IMR-90 (cell line): ENCODE measurements at regions of chr7 and their contacts with region 1.

Region 1: DNA sequence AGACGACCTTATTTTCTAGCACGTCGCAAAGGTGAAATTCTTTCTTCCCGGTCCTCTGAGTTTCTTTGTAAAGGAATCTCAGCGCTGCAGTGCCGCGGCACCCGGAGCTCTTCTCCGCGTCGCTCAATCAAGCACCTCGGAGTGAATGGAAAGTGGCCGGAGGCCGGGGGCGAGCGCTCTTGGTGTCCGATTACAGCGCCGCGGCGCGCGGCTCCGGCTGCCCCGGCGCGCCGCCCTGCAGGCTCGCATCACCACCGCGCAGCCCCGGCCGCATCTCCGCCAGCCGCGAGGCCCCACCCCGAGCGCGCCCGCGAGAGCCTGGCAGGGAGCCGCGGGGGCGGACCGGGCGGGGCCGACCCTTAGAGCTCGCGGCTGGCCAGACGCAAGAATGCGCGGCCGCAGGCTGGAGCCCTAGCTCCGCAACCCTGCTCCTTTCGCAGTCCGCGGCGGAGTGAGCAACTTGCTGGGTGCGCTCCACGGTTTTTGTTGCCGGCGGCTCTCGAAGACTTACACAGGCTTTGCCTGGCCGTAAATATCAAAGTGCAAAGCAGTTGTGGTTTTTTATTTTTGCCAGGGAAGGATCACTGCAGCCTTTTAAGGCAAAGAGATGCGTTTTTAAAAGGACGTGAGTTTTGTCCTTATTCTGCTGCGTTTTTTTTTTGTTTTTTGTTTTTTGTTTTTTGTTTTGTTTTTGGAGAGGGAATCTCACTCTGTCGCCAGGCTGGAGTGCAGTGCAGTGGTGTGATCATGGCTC is at the start of gene SEMA3C:
- DNase-seq: peak; percentile 94
- ATAC-seq: peak; percentile 96
- H3K4me3 ChIP-seq: peak within 1 kb of the TSS; percentile 83
- H3K27ac ChIP-seq: peak within 1 kb of the TSS; percentile 73
- H3K4me1 ChIP-seq: peaks cover 1% of the 10 kb centered on the region; the same call in 1 of the 2 replicates
- H3K27me3 ChIP-seq: no peaks in the 10 kb centered on the region
- CTCF ChIP-seq: 0 out of 2 replicates have a peak, but pooled peaks have one; percentile 15
- POLR2A ChIP-seq: peak; percentile 87
- RAD21 ChIP-seq: peak; percentile 42
- total RNA-seq, gene SEMA3C: 97.1 and 116 TPM in 2 replicates

Region 2: DNA sequence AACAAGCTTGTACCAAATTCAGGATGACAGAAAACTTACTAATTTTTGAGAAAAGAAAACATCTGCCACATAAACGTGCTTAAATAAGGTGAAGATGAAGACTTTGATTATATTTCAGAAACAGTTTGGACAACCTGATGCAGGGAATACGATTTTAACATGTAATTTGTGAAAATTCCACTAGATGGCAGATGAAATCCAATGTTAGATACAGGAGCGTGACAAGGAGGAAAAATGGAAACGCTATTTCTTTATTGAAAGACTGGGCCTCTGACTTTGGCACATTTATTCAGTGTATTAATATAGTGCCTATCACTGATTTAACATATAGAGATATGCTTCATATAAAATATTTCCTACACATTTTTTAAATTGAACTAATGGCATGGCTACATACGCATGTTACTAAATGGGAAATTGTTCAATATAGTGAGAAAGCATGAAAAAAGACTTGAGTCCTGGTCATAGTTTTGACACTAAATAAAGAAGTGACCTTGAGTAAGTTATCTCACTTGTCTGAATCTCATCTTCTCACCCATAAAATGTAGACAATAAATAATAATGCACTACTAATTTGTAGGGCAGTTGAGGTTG is 219.9 kb before region 1 on chr7:
- CTCF ChIA-PET with region 1: interaction called, 3 read pairs
- POLR2A ChIA-PET with region 1: no interaction called
- dilution Hi-C with region 1: no loop called
- in situ Hi-C with region 1: loop called (anchors 5 kb)
- intact Hi-C with region 1: loop called (anchors 1 kb)
- DNase-seq: peak; percentile 63
- ATAC-seq: peak; percentile 66
- H3K4me3 ChIP-seq: no peak overlapping the region
- H3K27ac ChIP-seq: no peak overlapping the region
- H3K4me1 ChIP-seq: peaks cover 9% of the 10 kb centered on the region
- H3K27me3 ChIP-seq: no peaks in the 10 kb centered on the region
- CTCF ChIP-seq: peak; percentile 69
- POLR2A ChIP-seq: no peak
- RAD21 ChIP-seq: peak; percentile 87

Region 3: GRCh38 chr7:80722616-80723141 is 196.4 kb before region 1 on chr7:
- CTCF ChIA-PET with region 1: interaction called, 5 read pairs
- POLR2A ChIA-PET with region 1: no interaction called
- dilution Hi-C with region 1: no loop called
- in situ Hi-C with region 1: no loop called
- intact Hi-C with region 1: loop called (anchors 5 kb)
- DNase-seq: peak; percentile 100
- ATAC-seq: peak; percentile 89
- H3K4me3 ChIP-seq: no peak overlapping the region
- H3K27ac ChIP-seq: peak overlapping the region; percentile 95
- H3K4me1 ChIP-seq: peaks cover 12% of the 10 kb centered on the region
- H3K27me3 ChIP-seq: no peaks in the 10 kb centered on the region
- CTCF ChIP-seq: no peak
- POLR2A ChIP-seq: no peak
- RAD21 ChIP-seq: peak; percentile 20; the same call in 1 of the 2 replicates

Region 4: GRCh38 chr7:80785961-80786536 is 133.0 kb before region 1 on chr7:
- CTCF ChIA-PET with region 1: no interaction called
- POLR2A ChIA-PET with region 1: no interaction called
- dilution Hi-C with region 1: no loop called
- in situ Hi-C with region 1: no loop called
- intact Hi-C with region 1: loop called (anchors 5 kb)
- DNase-seq: peak; percentile 47
- ATAC-seq: no peak
- H3K4me3 ChIP-seq: no peak overlapping the region
- H3K27ac ChIP-seq: no peak overlapping the region
- H3K4me1 ChIP-seq: peaks cover 4% of the 10 kb centered on the region; the same call in 1 of the 2 replicates
- H3K27me3 ChIP-seq: no peaks in the 10 kb centered on the region
- CTCF ChIP-seq: no peak
- POLR2A ChIP-seq: no peak
- RAD21 ChIP-seq: no peak

Region 5: DNA sequence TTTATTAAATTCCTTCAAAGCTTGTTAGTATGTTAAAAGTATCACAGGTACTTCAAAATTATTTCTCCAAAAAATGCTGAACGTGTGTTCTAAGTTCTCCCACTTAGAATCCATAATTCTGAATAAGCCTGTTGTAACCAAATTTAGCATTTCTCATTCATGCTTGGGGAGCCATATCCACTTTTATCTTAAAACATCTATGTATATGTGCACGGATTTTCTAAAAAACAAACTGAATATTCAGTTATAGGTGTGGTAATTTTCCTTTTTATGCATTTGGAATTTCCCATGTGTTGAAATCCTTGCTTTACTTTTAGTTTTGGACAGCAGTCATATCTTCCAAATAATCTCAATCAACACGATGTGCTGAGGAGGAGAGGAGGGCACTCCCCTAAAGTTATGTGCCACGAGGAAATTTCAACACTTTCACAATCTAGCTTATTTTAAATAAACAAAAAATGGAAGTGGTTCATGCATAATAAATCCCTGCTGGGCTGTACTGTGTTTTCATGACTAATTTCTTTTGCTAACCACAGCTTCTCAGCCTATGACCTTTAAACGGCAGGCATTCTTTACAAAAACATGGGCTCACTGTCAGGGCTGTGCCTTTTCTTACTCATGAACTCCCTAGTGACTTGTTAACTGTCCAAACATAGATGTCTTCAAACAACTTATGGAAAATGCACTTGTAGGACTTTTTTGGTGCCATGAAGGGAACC is 380.0 kb after region 1 on chr7:
- CTCF ChIA-PET with region 1: no interaction called
- POLR2A ChIA-PET with region 1: no interaction called
- dilution Hi-C with region 1: no loop called
- in situ Hi-C with region 1: no loop called
- intact Hi-C with region 1: loop called (anchors 5 kb)
- DNase-seq: peak; percentile 96
- ATAC-seq: peak; percentile 100
- H3K4me3 ChIP-seq: no peak overlapping the region
- H3K27ac ChIP-seq: no peak overlapping the region
- H3K4me1 ChIP-seq: no peaks in the 10 kb centered on the region
- H3K27me3 ChIP-seq: peaks cover 12% of the 10 kb centered on the region
- CTCF ChIP-seq: no peak
- POLR2A ChIP-seq: no peak
- RAD21 ChIP-seq: no peak; the same call in 1 of the 2 replicates

Region 6: DNA sequence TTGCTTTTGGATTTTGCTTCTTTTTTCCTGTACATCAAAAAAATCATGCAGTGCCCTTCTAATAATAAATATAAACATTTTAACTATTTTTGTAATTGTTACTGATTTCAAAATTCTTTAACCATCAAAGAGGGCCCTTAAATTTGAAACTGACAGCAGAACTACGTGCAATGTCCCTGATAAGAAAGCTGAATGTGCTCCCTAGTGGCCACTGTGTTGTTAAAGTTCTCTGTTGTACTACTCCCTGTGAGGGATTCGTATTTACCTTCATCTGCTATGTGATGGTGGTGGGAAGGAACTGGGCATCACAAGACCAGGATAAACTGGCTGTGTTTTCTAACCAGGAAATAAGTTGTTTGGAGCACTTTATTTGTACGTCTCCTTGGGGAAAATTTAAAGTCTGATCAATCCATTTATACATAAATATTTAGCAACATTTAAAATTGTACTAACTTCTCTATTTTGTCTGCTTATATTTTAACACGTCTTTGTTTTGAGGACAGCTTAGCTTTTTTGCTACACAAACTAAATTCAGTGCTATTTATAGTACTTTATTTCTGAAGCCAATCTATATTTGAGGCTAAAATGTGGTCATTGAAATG is 528.4 kb after region 1 on chr7:
- CTCF ChIA-PET with region 1: no interaction called
- POLR2A ChIA-PET with region 1: no interaction called
- dilution Hi-C with region 1: no loop called
- in situ Hi-C with region 1: no loop called
- intact Hi-C with region 1: loop called (anchors 2 kb)
- DNase-seq: peak; percentile 70
- ATAC-seq: peak; percentile 91
- H3K4me3 ChIP-seq: no peak overlapping the region
- H3K27ac ChIP-seq: no peak overlapping the region
- H3K4me1 ChIP-seq: no peaks in the 10 kb centered on the region
- H3K27me3 ChIP-seq: no peaks in the 10 kb centered on the region
- CTCF ChIP-seq: peak; percentile 59
- POLR2A ChIP-seq: no peak
- RAD21 ChIP-seq: peak; percentile 72

Region 7: GRCh38 chr7:81457852-81458522 is 538.9 kb after region 1 on chr7:
- CTCF ChIA-PET with region 1: interaction called, 6 read pairs
- POLR2A ChIA-PET with region 1: no interaction called
- dilution Hi-C with region 1: no loop called
- in situ Hi-C with region 1: loop called (anchors 5 kb)
- intact Hi-C with region 1: loop called (anchors 1 kb)
- DNase-seq: peak; percentile 56
- ATAC-seq: peak; percentile 42; the same call in 1 of the 2 replicates
- H3K4me3 ChIP-seq: no peak overlapping the region
- H3K27ac ChIP-seq: no peak overlapping the region
- H3K4me1 ChIP-seq: no peaks in the 10 kb centered on the region
- H3K27me3 ChIP-seq: peaks cover 2% of the 10 kb centered on the region; the same call in 1 of the 2 replicates
- CTCF ChIP-seq: peak; percentile 66
- POLR2A ChIP-seq: no peak
- RAD21 ChIP-seq: peak; percentile 66